A549 (cell line): ENCODE measurements at regions of chr5 and their contacts with region 1.

Region 1: DNA sequence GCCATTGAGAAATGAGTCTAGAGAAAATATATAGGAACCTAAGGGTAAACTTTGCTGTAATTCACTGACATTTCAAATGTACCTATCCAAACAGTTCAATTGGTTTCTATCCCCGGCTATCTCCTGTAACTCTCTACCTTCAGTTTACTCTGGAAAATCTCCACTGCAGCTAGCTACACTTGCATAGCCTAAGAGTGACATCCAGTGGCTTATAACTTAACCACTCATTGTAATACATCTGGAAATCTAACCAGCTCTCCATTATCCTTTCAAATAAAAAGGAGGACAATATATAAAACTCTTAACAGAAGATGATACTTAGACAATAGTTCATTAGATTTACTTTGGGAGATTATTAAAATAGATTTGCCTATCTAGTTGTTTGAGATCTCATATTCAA is 35.3 kb upstream of the SPDL1 start:
- DNase-seq: peak; percentile 48 to 68
- ATAC-seq: peak; percentile 95 to 99
- H3K4me3 ChIP-seq: no peak overlapping the region
- H3K27ac ChIP-seq: peak overlapping the region; percentile 11 to 63; a peak in 2 of 6 replicates
- H3K4me1 ChIP-seq: peaks cover 32% of the 10 kb centered on the region
- CTCF ChIP-seq: peak; percentile 92
- EP300 ChIP-seq: no peak
- POLR2A ChIP-seq: no peak
- RAD21 ChIP-seq: peak; percentile 97 to 99

Region 2: GRCh38 chr5:168679515-168679920 is 868.8 kb before region 1 on chr5:
- CTCF ChIA-PET with region 1: interaction called, 11 read pairs
- POLR2A ChIA-PET with region 1: no interaction called
- DNase-seq: peak; percentile 69 to 71
- ATAC-seq: peak; percentile 77 to 91; a peak in 5 of 6 replicates
- H3K4me3 ChIP-seq: no peak overlapping the region
- H3K27ac ChIP-seq: no peak overlapping the region
- H3K4me1 ChIP-seq: no peaks in the 10 kb centered on the region
- CTCF ChIP-seq: peak; percentile 91
- EP300 ChIP-seq: no peak
- POLR2A ChIP-seq: no peak
- RAD21 ChIP-seq: peak; percentile 89 to 93

Region 3: GRCh38 chr5:168706655-168707069 is 841.7 kb before region 1 on chr5:
- CTCF ChIA-PET with region 1: interaction called, 24 read pairs
- POLR2A ChIA-PET with region 1: no interaction called
- DNase-seq: peak; percentile 36 to 49
- ATAC-seq: peak; percentile 80 to 87
- H3K4me3 ChIP-seq: no peak overlapping the region
- H3K27ac ChIP-seq: no peak overlapping the region
- H3K4me1 ChIP-seq: no peaks in the 10 kb centered on the region; the same call in 2 of the 3 replicates
- CTCF ChIP-seq: peak; percentile 69
- EP300 ChIP-seq: no peak
- POLR2A ChIP-seq: no peak
- RAD21 ChIP-seq: peak; percentile 83 to 85

Region 4: GRCh38 chr5:168947212-168947868 is 601.0 kb before region 1 on chr5:
- CTCF ChIA-PET with region 1: interaction called, 13 read pairs
- POLR2A ChIA-PET with region 1: no interaction called
- DNase-seq: peak; percentile 44 to 60
- ATAC-seq: peak; percentile 91 to 97
- H3K4me3 ChIP-seq: no peak overlapping the region
- H3K27ac ChIP-seq: peak overlapping the region in 1 of 2 experiments; percentile 53; a peak in 2 of 6 replicates
- H3K4me1 ChIP-seq: 0 out of 3 replicates have a peak, but pooled peaks cover 2% of the 10 kb centered on the region
- CTCF ChIP-seq: peak; percentile 67
- EP300 ChIP-seq: no peak
- POLR2A ChIP-seq: no peak
- RAD21 ChIP-seq: peak; percentile 73 to 78

Region 5: DNA sequence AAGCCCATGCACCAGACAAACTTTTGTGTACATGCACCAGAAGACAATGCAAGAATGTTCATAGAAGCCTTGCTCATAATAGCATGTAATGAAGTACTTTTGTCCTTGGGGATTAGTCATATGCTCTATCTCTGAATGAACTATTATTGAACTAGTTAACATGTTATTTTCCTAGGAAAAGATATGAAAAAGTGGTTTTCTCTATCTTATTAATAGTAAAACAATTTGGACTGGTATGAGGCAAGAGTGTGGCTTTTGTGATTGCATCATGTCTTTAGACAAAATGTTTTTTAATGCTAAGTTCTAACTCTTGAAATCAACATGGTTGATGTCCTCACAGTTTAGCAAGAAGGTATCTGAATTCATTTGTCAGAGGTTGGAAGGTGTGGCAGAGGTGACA is 20.5 kb before region 1 on chr5:
- CTCF ChIA-PET with region 1: no interaction called
- POLR2A ChIA-PET with region 1: no interaction called
- DNase-seq: no peak
- ATAC-seq: no peak
- H3K4me3 ChIP-seq: no peak overlapping the region
- H3K27ac ChIP-seq: no peak overlapping the region
- H3K4me1 ChIP-seq: no peaks in the 10 kb centered on the region
- CTCF ChIP-seq: no peak
- EP300 ChIP-seq: no peak
- POLR2A ChIP-seq: no peak
- RAD21 ChIP-seq: no peak

Region 6: GRCh38 chr5:169561893-169562292 is 13.6 kb after region 1 on chr5:
- CTCF ChIA-PET with region 1: interaction called, 18 read pairs
- POLR2A ChIA-PET with region 1: no interaction called
- DNase-seq: no peak
- ATAC-seq: no peak
- H3K4me3 ChIP-seq: no peak overlapping the region
- H3K27ac ChIP-seq: no peak overlapping the region
- H3K4me1 ChIP-seq: no peaks in the 10 kb centered on the region
- CTCF ChIP-seq: no peak
- EP300 ChIP-seq: no peak
- POLR2A ChIP-seq: no peak
- RAD21 ChIP-seq: no peak